ENCODE measurements at regions of chr19 and their contacts with region 1.

Region 1: DNA sequence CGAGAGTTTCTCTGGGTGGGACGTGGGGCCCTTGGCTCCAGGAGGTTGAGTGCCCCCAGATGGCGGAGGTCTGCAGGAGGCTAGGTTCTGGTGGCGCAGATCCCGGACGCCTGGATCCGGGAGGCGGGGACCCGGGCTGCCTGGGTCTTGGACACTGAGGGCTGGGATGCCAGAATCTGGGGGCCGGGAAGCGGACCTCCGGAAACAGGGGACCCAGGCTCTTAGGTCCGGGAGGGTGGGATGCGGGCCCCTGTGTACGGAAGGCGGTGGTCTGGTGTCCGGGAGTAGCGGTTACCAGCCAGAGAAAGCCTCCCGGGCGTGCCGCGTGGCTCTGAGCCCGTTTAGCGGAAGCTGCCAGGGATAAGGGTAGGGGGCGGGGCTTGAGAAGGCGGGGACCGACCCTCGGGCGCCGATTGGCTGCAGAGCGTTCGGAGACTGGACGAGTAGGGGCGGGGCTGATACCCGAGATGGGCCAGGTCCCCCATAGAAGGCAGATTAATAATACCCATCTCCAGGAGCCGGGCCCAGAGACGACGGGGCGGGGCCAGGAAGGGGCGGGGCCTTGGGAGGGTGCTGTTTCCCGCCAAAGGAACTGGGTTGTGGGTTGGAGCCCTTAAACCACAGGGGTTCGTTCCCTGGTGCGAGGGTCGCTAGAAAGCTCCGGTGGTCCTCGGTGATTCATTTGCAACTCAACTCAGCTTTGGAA is at the start of gene SLC1A5:
- DNase-seq: peak; percentile 99
- H3K4me3 Mint-ChIP-seq: peak within 1 kb of the TSS; percentile 93
- H3K27ac Mint-ChIP-seq: peak within 1 kb of the TSS; percentile 94
- H3K4me1 Mint-ChIP-seq: peaks cover 24% of the 10 kb centered on the region
- H3K27me3 Mint-ChIP-seq: no peaks in the 10 kb centered on the region
- CTCF ChIP-seq: no peak
- total RNA-seq, gene SLC1A5: 372 and 417 TPM in 2 replicates

Region 2: DNA sequence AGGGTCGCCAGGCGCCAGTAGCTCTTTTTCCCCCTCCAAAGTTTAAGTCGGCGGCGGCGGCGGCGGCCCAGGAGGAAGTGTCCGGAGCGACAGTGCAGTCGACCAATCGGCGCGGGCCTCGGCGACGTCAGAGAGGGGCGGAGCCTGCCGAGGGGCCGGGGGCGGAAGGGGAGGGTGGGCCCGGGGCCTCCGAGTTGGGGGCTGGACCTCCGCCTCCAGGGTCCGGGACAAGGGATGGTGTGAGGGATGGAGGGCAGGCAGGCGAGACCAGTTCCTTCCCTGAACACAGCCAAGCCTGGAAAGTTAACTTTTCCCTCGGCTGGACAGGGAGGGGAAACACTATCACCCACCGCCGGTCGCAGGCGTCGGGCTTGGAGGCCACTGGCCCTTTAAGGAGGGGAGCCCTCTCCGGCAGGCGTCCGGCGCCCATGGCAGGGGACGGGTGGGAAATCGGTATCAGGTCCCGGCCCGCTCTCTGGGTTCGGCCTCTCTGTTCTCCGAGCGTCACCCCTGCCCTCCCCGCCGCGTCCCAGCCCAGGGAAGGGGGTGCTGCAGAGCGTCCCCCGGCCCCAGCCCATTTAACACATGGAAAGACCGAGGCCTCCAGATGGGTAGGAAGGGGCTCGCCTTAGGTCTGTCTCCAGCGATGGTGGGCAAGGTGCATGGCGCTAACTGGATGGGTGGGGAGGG is 71.2 kb before region 1 on chr19 and contains the start of gene PRKD2:
- CTCF ChIA-PET with region 1: no interaction called
- POLR2A ChIA-PET with region 1: interaction called, 12 read pairs
- intact Hi-C with region 1: no loop called
- DNase-seq: peak; percentile 76
- H3K4me3 Mint-ChIP-seq: peak within 1 kb of the TSS; percentile 97
- H3K27ac Mint-ChIP-seq: peak within 1 kb of the TSS; percentile 99
- H3K4me1 Mint-ChIP-seq: no peaks in the 10 kb centered on the region
- H3K27me3 Mint-ChIP-seq: no peaks in the 10 kb centered on the region
- CTCF ChIP-seq: no peak
- total RNA-seq, gene PRKD2: 30.4 and 35.9 TPM in 2 replicates

Region 3: DNA sequence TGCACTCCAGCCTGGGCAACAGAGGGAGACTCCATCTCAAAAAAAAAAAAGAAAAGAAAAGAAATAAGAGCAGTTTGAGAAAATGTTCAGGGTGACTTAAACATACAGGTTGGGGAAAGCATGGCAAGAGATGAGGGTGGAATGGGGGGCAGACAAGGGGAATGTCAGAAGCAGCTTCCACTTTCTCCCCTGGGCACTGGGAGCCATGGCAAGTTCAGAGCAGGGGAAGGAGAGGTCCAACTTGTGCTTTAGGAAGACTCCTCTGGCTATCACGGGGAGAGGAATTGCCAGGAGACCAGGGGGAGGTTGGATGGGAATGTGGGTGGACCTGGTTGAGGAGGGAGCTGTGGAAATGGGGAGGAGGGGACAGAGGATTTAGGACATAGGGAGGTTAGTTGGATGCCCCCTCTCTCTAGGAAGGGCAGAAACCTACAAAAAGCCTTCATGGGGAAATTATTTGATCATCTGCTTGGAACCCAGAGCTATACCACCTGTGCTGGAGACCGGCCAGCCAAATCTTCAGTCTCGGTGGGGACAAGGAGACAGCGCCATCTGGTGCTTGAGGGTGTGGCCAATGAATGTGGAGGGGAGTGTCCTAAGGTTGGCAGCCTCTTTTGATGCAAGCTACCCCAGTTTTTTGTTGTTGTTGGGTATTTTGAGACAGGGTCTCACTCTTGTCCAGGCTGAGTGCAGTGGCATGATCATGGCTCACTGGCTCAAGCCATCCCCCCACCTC is 34.8 kb before region 1 on chr19:
- CTCF ChIA-PET with region 1: interaction called, 26 read pairs
- POLR2A ChIA-PET with region 1: interaction called, 147 read pairs
- intact Hi-C with region 1: loop called (anchors 1 kb)
- DNase-seq: peak; percentile 69
- H3K4me3 Mint-ChIP-seq: no peak overlapping the region
- H3K27ac Mint-ChIP-seq: no peak overlapping the region
- H3K4me1 Mint-ChIP-seq: peaks cover 11% of the 10 kb centered on the region
- H3K27me3 Mint-ChIP-seq: no peaks in the 10 kb centered on the region
- CTCF ChIP-seq: no peak

Region 4: DNA sequence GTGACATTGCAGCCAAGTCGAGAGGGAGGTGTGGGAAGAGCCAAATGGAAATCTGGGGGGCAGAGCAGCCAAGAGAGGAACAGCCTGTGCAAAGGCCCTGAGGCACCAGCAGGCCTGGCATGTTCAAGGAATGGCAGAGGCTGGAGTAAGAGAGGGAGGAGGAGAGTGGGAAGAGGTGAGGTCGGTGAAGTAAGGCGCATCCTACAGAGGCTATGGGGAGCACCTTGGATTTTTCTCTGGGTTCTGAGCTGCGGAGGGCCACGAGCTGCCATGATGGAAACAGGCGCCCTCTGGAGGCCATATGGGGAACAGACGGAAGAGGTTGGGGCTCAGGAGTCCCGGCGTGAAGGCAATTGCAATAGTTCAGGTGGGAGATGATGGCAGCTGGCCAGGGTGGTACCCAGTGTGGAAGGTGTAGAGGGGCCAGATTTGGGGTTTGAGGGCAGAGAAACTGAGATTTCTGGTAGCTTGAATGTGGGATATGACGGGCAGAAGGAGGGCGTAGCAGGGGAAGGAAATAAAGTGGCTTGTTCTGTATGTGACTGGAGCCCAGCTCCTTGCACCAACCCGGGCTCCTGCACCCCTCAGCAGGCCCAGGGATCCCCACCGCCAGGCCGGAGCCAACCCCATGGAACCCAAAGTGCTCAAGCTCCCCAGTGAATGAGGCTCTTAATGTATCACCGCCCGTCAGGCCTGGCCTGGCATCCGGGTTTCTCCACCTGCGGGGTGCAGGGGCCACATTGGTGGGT is 21.7 kb before region 1 on chr19:
- CTCF ChIA-PET with region 1: interaction called, 5 read pairs
- POLR2A ChIA-PET with region 1: interaction called, 147 read pairs
- intact Hi-C with region 1: no loop called
- DNase-seq: peak; percentile 62
- H3K4me3 Mint-ChIP-seq: no peak overlapping the region
- H3K27ac Mint-ChIP-seq: no peak overlapping the region
- H3K4me1 Mint-ChIP-seq: no peaks in the 10 kb centered on the region
- H3K27me3 Mint-ChIP-seq: no peaks in the 10 kb centered on the region
- CTCF ChIP-seq: peak; percentile 43

Region 5: GRCh38 chr19:46821498-46822409 is 33.3 kb after region 1 on chr19:
- CTCF ChIA-PET with region 1: interaction called, 3 read pairs
- POLR2A ChIA-PET with region 1: interaction called, 13 read pairs
- intact Hi-C with region 1: no loop called
- DNase-seq: no peak
- H3K4me3 Mint-ChIP-seq: no peak overlapping the region
- H3K27ac Mint-ChIP-seq: no peak overlapping the region
- H3K4me1 Mint-ChIP-seq: no peaks in the 10 kb centered on the region
- H3K27me3 Mint-ChIP-seq: no peaks in the 10 kb centered on the region
- CTCF ChIP-seq: no peak

Region 6: DNA sequence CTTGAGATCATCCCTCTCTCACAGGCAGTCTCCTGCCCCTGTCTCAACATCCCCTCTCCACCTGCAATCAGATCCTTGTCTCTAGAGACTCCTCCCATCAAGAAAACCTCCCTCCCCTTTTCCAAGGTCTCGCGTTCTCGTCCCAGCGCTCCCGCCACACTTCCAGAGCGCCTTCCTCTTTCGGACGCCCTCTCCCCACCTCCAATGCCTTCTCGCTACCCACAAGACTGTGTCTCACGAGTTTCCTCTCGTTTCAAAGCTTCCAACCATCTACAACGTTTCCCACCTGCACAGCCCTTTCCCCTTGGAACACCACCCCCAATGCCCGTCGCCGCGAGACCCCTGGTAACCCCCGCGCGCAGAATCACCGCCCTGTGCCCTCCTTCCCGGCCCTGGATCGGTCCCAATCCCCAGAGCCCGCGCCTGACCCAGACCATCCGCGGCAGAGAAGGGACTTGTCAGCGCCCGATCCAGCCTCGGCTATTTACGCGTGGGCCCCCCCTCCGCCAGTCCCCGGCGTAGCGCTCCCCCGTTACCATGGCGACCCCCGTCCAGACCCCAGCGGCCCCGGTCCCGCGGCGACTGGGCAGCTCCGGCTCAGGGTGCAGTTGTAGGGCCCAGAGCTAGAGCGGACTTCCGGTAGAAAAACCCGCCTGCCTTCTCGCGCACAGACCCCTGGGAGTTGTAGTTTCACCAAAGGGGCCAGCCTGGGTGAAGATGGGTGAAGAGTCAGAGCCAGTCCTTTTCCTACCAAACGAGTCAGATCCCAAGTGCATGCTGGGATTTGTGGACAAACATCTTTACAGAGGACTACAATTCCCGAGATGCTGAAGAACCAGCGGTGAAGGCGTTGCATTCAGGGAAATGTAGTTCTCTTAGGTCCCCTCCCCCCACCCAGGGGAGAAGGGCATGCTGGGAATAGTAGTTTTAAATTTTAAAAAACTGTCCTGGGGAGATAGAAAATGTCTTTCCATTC is 62.1 kb after region 1 on chr19 and contains the start of gene AP2S1:
- CTCF ChIA-PET with region 1: interaction called, 3 read pairs
- POLR2A ChIA-PET with region 1: interaction called, 25 read pairs
- intact Hi-C with region 1: no loop called
- DNase-seq: peak; percentile 99
- H3K4me3 Mint-ChIP-seq: peak within 1 kb of the TSS; percentile 98
- H3K27ac Mint-ChIP-seq: peak within 1 kb of the TSS; percentile 95
- H3K4me1 Mint-ChIP-seq: peaks cover 16% of the 10 kb centered on the region
- H3K27me3 Mint-ChIP-seq: no peaks in the 10 kb centered on the region
- CTCF ChIP-seq: no peak
- total RNA-seq, gene AP2S1: 237 and 252 TPM in 2 replicates

Region 7: GRCh38 chr19:46907880-46908279 is 119.5 kb after region 1 on chr19:
- CTCF ChIA-PET with region 1: no interaction called
- POLR2A ChIA-PET with region 1: no interaction called
- intact Hi-C with region 1: no loop called
- DNase-seq: no peak
- H3K4me3 Mint-ChIP-seq: no peak overlapping the region
- H3K27ac Mint-ChIP-seq: no peak overlapping the region
- H3K4me1 Mint-ChIP-seq: peaks cover 30% of the 10 kb centered on the region
- H3K27me3 Mint-ChIP-seq: no peaks in the 10 kb centered on the region
- CTCF ChIP-seq: no peak

Region 8: GRCh38 chr19:47112997-47113849 is 324.8 kb after region 1 on chr19 and contains the start of gene ZC3H4:
- CTCF ChIA-PET with region 1: interaction called, 4 read pairs
- POLR2A ChIA-PET with region 1: interaction called, 16 read pairs
- intact Hi-C with region 1: no loop called
- DNase-seq: peak; percentile 100
- H3K4me3 Mint-ChIP-seq: peak within 1 kb of the TSS; percentile 94
- H3K27ac Mint-ChIP-seq: peak within 1 kb of the TSS; percentile 99
- H3K4me1 Mint-ChIP-seq: peaks cover 22% of the 10 kb centered on the region
- H3K27me3 Mint-ChIP-seq: no peaks in the 10 kb centered on the region
- CTCF ChIP-seq: no peak
- total RNA-seq, gene ZC3H4: 41.4 and 41.8 TPM in 2 replicates

Measured in MCF 10A (cell line).